BJ (cell line): ENCODE measurements at regions of chr19 and their contacts with region 1.

Region 1: GRCh38 chr19:10593820-10594637 is 6.9 kb upstream of the AP1M2 start:
- DNase-seq: no peak
- H3K4me3 ChIP-seq: no peak overlapping the region
- H3K27me3 ChIP-seq: no peaks in the 10 kb centered on the region; the same call in 1 of the 2 replicates
- CTCF ChIP-seq: no peak

Region 2: DNA sequence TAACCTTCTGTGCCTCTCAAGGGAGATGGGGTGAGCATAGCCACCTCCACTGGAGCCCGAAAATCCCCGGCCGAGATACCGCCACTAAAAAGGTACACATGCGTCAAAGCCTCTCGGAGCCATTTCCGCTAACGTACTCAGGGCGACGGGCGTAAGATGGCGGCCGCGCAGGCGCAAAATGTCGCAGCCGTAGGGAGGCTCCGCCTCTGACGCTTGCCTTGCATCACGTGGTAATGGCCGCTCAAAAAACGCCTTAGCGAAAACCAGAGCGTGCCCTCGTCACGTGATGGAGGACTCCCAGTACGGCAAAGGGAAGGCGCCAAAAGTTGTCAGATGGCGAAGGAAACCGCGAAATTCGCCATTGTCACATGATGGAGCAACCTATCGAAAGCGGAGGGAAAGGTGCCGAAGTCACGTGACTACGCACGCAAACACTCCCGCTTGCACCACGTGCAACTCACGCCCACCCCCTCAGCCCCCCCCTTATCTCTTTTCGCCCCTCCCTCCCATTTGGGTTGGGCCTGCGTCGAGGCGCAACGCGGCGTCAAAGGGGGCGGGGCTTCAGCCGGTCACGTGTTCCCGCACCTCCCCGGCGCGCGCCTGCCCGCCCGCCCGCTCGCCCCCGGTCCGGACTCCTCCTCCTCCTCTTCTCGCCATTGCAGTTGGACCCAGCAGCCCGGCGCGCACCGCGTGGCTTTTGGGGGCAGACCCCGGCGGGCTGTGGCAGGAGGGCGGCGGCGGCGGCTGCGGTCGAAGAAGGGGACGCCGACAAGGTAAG is 59.9 kb after region 1 on chr19 and contains the start of gene ILF3:
- CTCF ChIA-PET with region 1: interaction called, 3 read pairs
- POLR2A ChIA-PET with region 1: interaction called, 29 read pairs
- DNase-seq: peak; percentile 100
- H3K4me3 ChIP-seq: peak within 1 kb of the TSS; percentile 53
- H3K27me3 ChIP-seq: no peaks in the 10 kb centered on the region
- CTCF ChIP-seq: no peak
- polyA plus RNA-seq, gene ILF3: 99.0 and 148 TPM in 2 replicates